Heart left ventricle (tissue), 16 donors: ENCODE measurements at regions of chr15 and their contacts with region 1.

Region 1: GRCh38 chr15:58457381-58457965 is 25.7 kb downstream of the LIPC start:
- DNase-seq: no peak
- ATAC-seq: no peak
- H3K4me3 ChIP-seq: no peak overlapping the region
- H3K27ac ChIP-seq: peak overlapping the region in 11 of 12 donors; percentile 12 to 84 (median 52)
- H3K4me1 ChIP-seq: peaks cover 10 to 48% (median 36%) of the 10 kb centered on the region in 12 donors
- H3K27me3 ChIP-seq: no peaks in the 10 kb centered on the region
- CTCF ChIP-seq: no peak
- POLR2A ChIP-seq: no peak

Region 2: GRCh38 chr15:58628206-58628947 is 170.9 kb after region 1 on chr15:
- intact Hi-C with region 1: loop called in 1 of 10 experiments (anchors 10 kb)
- DNase-seq: no peak
- ATAC-seq: peak in 2 of 4 donors; percentile 61 to 68
- H3K4me3 ChIP-seq: peak overlapping the region in 10 of 12 donors; percentile 5 to 49 (median 40)
- H3K27ac ChIP-seq: peak overlapping the region; percentile 6 to 89 (median 71)
- H3K4me1 ChIP-seq: peaks cover 0 to 37% (median 19%) of the 10 kb centered on the region in 12 donors
- H3K27me3 ChIP-seq: no peaks in the 10 kb centered on the region
- CTCF ChIP-seq: no peak
- POLR2A ChIP-seq: no peak